Activated T-helper 1 cell treated with anti-CD3 and anti-CD28 coated beads, Interleukin-12 subunit alpha, Interleukin-12 subunit beta, Interleukin-2, Interleukin-4 antibody, amounts not matched to agents 30 ng/mL and 10 ng/mL and 1 ng/mL, durations not matched to agents 14 hours and 24 hours and 36 hours (primary cell): ENCODE measurements at regions of chr13 and their contacts with region 1.

Region 1: GRCh38 chr13:36420437-36420891 is 11.8 kb upstream of the CCNA1 start:
- DNase-seq: peak; percentile 61
- H3K4me3 Mint-ChIP-seq: peak overlapping the region; percentile 15
- H3K27ac Mint-ChIP-seq: peak overlapping the region; percentile 46
- H3K4me1 Mint-ChIP-seq: peaks cover 40% of the 10 kb centered on the region
- H3K27me3 Mint-ChIP-seq: peaks cover 13% of the 10 kb centered on the region

Region 2: GRCh38 chr13:36310417-36311108 is 109.9 kb before region 1 on chr13:
- intact Hi-C with region 1: no loop called
- DNase-seq: no peak
- H3K4me3 Mint-ChIP-seq: no peak overlapping the region
- H3K27ac Mint-ChIP-seq: no peak overlapping the region
- H3K4me1 Mint-ChIP-seq: no peaks in the 10 kb centered on the region
- H3K27me3 Mint-ChIP-seq: no peaks in the 10 kb centered on the region

Region 3: GRCh38 chr13:36346222-36347083 is 74.0 kb before region 1 on chr13 and contains the start of gene SPART:
- intact Hi-C with region 1: loop called (anchors 1 kb)
- DNase-seq: peak; percentile 85
- H3K4me3 Mint-ChIP-seq: peak within 1 kb of the TSS; percentile 92
- H3K27ac Mint-ChIP-seq: peak within 1 kb of the TSS; percentile 98
- H3K4me1 Mint-ChIP-seq: peaks cover 36% of the 10 kb centered on the region
- H3K27me3 Mint-ChIP-seq: peaks cover 10% of the 10 kb centered on the region
- total RNA-seq, gene SPART: 28.0 and 28.7 TPM in 2 replicates

Region 4: GRCh38 chr13:36438594-36439483 is 18.4 kb after region 1 on chr13:
- intact Hi-C with region 1: loop called (anchors 2 kb)
- DNase-seq: no peak
- H3K4me3 Mint-ChIP-seq: peak overlapping the region; percentile 47
- H3K27ac Mint-ChIP-seq: no peak overlapping the region
- H3K4me1 Mint-ChIP-seq: peaks cover 18% of the 10 kb centered on the region
- H3K27me3 Mint-ChIP-seq: peaks cover 14% of the 10 kb centered on the region

Region 5: DNA sequence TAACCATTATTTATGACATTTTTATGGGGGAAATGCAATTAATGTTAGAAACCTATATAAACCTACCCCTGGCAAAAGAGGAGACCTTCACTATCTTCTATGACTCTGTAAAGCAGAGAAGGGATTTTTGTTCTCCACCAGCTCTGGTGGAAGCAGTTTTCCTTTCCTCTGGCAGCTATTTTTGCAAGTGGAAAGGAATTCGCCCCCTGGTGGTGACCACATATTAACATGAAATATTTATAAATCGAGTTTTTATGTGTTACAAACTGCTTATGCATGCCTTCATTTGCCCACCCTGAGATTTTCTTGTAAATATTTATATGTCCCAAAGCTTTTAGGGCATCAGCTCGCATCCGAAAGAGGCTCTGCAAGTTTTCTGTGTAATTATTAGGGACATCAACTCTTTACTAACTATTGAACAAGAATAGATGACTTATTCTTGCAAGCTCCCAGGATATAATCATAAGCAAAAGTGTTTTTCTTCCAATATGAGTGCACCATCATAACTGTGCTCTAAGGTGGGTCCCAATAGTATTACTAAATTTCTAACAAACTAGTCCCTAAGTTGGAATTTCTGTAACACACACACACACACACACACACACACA is 315.8 kb after region 1 on chr13:
- intact Hi-C with region 1: loop called (anchors 1 kb)
- DNase-seq: no peak
- H3K4me3 Mint-ChIP-seq: no peak overlapping the region
- H3K27ac Mint-ChIP-seq: no peak overlapping the region
- H3K4me1 Mint-ChIP-seq: no peaks in the 10 kb centered on the region
- H3K27me3 Mint-ChIP-seq: peaks cover 4% of the 10 kb centered on the region

Region 6: DNA sequence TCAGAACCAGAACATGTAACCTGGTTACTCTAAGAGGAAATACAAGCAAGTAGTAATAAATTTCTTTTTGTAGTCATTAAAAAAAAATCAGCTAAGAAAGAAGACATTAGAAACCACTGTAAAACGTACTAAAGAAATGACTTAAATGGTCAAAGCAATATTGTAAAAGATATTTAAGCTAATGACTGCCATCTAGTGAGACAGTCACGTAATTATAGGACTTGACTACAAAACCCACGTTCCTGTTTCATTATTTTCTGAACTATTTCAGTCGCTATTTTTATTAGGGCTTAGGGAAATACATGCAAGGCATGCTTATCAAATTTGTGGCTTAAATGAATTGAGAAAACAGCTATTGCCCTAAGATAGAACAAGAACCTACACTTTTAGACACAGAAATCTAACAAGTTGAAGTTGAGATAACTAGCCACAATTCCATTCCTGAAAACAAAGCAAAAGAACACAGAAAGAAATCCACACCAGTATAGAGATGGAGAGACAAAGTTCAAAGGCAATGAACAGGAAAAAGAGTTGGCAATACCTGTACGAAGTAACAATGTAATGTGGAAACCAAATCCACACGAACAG is 560.8 kb after region 1 on chr13:
- intact Hi-C with region 1: loop called (anchors 5 kb)
- DNase-seq: no peak
- H3K4me3 Mint-ChIP-seq: no peak overlapping the region
- H3K27ac Mint-ChIP-seq: no peak overlapping the region
- H3K4me1 Mint-ChIP-seq: no peaks in the 10 kb centered on the region
- H3K27me3 Mint-ChIP-seq: no peaks in the 10 kb centered on the region